BJ (cell line): ENCODE measurements at regions of chr7 and their contacts with region 1.

Region 1: DNA sequence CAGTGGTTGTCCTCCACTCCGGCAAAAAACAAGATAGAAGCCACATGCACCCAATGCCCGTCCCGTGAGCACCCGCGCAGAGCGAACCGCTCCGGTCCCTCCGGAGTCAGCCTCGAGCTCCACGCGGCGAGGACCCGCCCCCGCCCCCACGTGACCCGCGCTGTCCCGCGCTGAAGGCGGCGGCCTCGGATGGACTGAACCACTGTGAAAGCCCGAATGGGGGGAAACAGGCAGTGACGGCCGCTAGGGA is 766 bp upstream of the EIF3B start:
- DNase-seq: peak; percentile 31
- H3K4me3 ChIP-seq: peak overlapping the region; percentile 100
- H3K27me3 ChIP-seq: no peaks in the 10 kb centered on the region
- CTCF ChIP-seq: no peak

Region 2: GRCh38 chr7:2248984-2249694 is 104.7 kb before region 1 on chr7:
- CTCF ChIA-PET with region 1: interaction called, 11 read pairs
- POLR2A ChIA-PET with region 1: no interaction called
- DNase-seq: peak; percentile 89
- H3K4me3 ChIP-seq: no peak overlapping the region
- H3K27me3 ChIP-seq: no peaks in the 10 kb centered on the region
- CTCF ChIP-seq: no peak; the same call in 1 of the 2 replicates

Region 3: GRCh38 chr7:2376351-2377154 is 22.7 kb after region 1 on chr7:
- CTCF ChIA-PET with region 1: no interaction called
- POLR2A ChIA-PET with region 1: no interaction called
- DNase-seq: no peak
- H3K4me3 ChIP-seq: no peak overlapping the region
- H3K27me3 ChIP-seq: no peaks in the 10 kb centered on the region
- CTCF ChIP-seq: no peak